ENCODE measurements at regions of chr11 and their contacts with region 1.

Region 1: DNA sequence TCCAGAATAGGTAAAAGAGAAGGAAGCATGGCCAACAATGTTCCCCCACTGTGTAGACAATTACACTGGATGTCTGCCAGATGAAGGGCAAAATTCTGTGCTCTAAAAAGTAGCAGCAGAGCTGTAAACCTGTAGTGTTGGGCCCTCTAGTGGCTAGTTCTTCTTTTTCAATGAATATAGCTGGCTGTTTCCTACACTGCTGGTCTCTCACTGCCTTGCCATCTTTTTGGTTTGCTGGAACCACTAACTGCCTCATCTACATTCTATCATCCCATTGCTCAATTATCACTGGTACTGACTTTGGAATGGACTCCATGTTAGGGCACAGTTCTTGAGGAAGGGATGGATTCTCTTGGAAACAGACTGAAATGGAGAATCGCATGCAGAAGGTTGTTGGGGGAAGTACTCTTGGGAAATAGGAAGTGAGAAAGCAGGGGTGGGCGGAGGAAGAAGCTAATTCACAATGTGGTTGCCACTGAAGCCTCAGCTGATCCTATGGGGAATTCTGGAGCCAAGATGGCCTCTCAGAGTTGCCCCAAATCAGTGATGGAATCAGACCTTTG is 17.9 kb downstream of the KCNE3 start:
- DNase-seq: peak; percentile 84
- ATAC-seq: peak; percentile 91
- H3K4me3 ChIP-seq: peak overlapping the region in 2 of 5 experiments; percentile 10 to 34
- H3K4me3 Mint-ChIP-seq: peak overlapping the region; percentile 78
- H3K27ac ChIP-seq: no peak overlapping the region
- H3K27ac Mint-ChIP-seq: peak overlapping the region; percentile 58
- H3K4me1 ChIP-seq: peaks cover 5 to 8% of the 10 kb centered on the region in 2 donors
- H3K4me1 Mint-ChIP-seq: peaks cover 5% of the 10 kb centered on the region
- H3K27me3 ChIP-seq: peaks cover 0 to 8% (median 2%) of the 10 kb centered on the region in 4 experiments
- H3K27me3 Mint-ChIP-seq: peaks cover 31% of the 10 kb centered on the region
- CTCF ChIP-seq: peak; percentile 82

Region 2: DNA sequence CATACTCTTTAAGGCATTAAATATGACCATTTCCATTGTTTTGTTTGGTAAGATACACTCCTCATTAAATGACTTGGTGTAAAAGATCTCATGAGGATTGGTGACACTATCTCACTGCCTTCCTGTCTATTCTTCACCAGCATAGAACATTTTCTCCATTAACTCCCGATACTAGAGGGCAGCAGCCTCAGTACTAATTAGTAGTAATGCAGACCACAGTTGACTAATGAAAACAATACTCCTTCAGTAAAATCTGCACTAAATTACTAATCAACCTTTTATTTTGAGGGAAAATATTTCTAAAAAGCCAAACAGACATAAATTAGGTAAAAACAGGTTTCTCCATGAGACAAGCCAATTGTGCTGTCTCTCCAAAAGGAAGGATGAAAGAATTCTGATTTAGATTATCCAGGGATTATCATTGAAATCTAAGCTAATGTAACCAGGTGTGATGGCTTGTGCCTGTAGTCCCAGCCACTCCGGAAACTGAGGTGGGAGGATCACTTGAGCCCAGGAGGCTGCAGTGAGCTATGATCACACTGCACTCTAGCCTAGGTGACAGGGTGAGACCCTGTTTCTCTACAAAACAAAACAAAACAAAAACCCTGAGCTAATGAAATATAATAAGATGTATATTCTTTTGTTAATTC is 60.6 kb before region 1 on chr11:
- CTCF ChIA-PET with region 1: interaction called, 325 read pairs
- POLR2A ChIA-PET with region 1: interaction called, 5 read pairs
- intact Hi-C with region 1: loop called (anchors 1 kb)
- DNase-seq: peak; percentile 75
- ATAC-seq: peak; percentile 76
- H3K4me3 ChIP-seq: no peak overlapping the region
- H3K4me3 Mint-ChIP-seq: no peak overlapping the region
- H3K27ac ChIP-seq: no peak overlapping the region
- H3K27ac Mint-ChIP-seq: no peak overlapping the region
- H3K4me1 ChIP-seq: no peaks in the 10 kb centered on the region
- H3K4me1 Mint-ChIP-seq: peaks cover 1% of the 10 kb centered on the region
- H3K27me3 ChIP-seq: no peaks in the 10 kb centered on the region
- H3K27me3 Mint-ChIP-seq: no peaks in the 10 kb centered on the region
- CTCF ChIP-seq: peak; percentile 90

Region 3: GRCh38 chr11:74462009-74462408 is 12.6 kb after region 1 on chr11:
- CTCF ChIA-PET with region 1: interaction called, 28 read pairs
- POLR2A ChIA-PET with region 1: no interaction called
- intact Hi-C with region 1: no loop called
- DNase-seq: no peak
- ATAC-seq: no peak
- H3K4me3 ChIP-seq: peak overlapping the region in 1 of 5 experiments; percentile 39
- H3K4me3 Mint-ChIP-seq: no peak overlapping the region
- H3K27ac ChIP-seq: no peak overlapping the region
- H3K27ac Mint-ChIP-seq: no peak overlapping the region
- H3K4me1 ChIP-seq: peaks cover 0 to under 1% of the 10 kb centered on the region in 2 donors
- H3K4me1 Mint-ChIP-seq: no peaks in the 10 kb centered on the region
- H3K27me3 ChIP-seq: peaks cover 0 to 19% (median 8%) of the 10 kb centered on the region in 4 experiments
- H3K27me3 Mint-ChIP-seq: peaks cover 31% of the 10 kb centered on the region
- CTCF ChIP-seq: no peak

Region 4: GRCh38 chr11:74570266-74571061 is 121.0 kb after region 1 on chr11:
- CTCF ChIA-PET with region 1: interaction called, 53 read pairs
- POLR2A ChIA-PET with region 1: interaction called, 3 read pairs
- intact Hi-C with region 1: loop called (anchors 1 kb)
- DNase-seq: peak; percentile 38
- ATAC-seq: no peak
- H3K4me3 ChIP-seq: no peak overlapping the region
- H3K4me3 Mint-ChIP-seq: no peak overlapping the region
- H3K27ac ChIP-seq: no peak overlapping the region
- H3K27ac Mint-ChIP-seq: no peak overlapping the region
- H3K4me1 ChIP-seq: no peaks in the 10 kb centered on the region
- H3K4me1 Mint-ChIP-seq: no peaks in the 10 kb centered on the region
- H3K27me3 ChIP-seq: no peaks in the 10 kb centered on the region
- H3K27me3 Mint-ChIP-seq: peaks cover 23% of the 10 kb centered on the region
- CTCF ChIP-seq: peak; percentile 45